IMR-90 (cell line): ENCODE measurements at regions of chr1 and their contacts with region 1.

Region 1: GRCh38 chr1:52702886-52703787 is 5.0 kb upstream of the COA7 start:
- DNase-seq: peak; percentile 80
- ATAC-seq: peak; percentile 85
- H3K4me3 ChIP-seq: peak overlapping the region; percentile 55
- H3K27ac ChIP-seq: peak overlapping the region; percentile 42
- H3K4me1 ChIP-seq: peaks cover 8% of the 10 kb centered on the region
- H3K27me3 ChIP-seq: no peaks in the 10 kb centered on the region
- CTCF ChIP-seq: no peak
- POLR2A ChIP-seq: no peak
- RAD21 ChIP-seq: no peak

Region 2: DNA sequence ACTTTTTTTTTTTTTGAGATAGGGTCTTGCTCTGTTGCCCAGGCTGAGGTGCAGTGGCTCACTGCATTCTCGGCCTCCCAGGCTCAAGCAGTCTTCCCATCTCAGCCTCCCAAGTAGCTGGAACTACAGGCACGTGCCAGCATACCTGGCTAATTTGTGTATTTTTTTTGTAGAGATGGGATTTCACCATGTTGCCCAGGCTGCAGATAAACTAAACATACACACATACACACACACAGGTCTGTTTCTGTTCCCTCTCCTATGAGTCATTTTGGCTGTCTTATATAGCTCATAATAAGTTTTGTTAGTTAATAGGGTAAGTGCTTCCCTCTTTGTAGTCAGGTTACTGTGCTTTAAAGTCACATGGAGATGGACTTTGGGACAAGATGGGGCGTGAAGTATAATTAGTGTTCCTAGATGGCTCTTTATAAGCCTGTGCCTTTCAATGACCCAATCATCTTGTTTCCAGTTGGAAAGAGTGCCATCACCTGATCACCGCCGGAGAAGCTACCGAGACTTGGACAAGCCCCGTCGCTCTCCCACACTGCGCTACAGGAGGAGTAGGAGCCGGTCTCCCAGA is 289.6 kb before region 1 on chr1:
- CTCF ChIA-PET with region 1: no interaction called
- POLR2A ChIA-PET with region 1: no interaction called
- dilution Hi-C with region 1: no loop called
- in situ Hi-C with region 1: no loop called
- intact Hi-C with region 1: no loop called
- DNase-seq: peak; percentile 50
- ATAC-seq: no peak
- H3K4me3 ChIP-seq: no peak overlapping the region
- H3K27ac ChIP-seq: no peak overlapping the region
- H3K4me1 ChIP-seq: no peaks in the 10 kb centered on the region
- H3K27me3 ChIP-seq: no peaks in the 10 kb centered on the region
- CTCF ChIP-seq: no peak
- POLR2A ChIP-seq: no peak
- RAD21 ChIP-seq: no peak

Region 3: GRCh38 chr1:52748119-52748518 is 45.0 kb after region 1 on chr1:
- CTCF ChIA-PET with region 1: interaction called, 3 read pairs
- POLR2A ChIA-PET with region 1: no interaction called
- dilution Hi-C with region 1: no loop called
- in situ Hi-C with region 1: no loop called
- intact Hi-C with region 1: loop called (anchors 5 kb)
- DNase-seq: no peak
- ATAC-seq: no peak
- H3K4me3 ChIP-seq: no peak overlapping the region
- H3K27ac ChIP-seq: no peak overlapping the region
- H3K4me1 ChIP-seq: peaks cover 11% of the 10 kb centered on the region
- H3K27me3 ChIP-seq: no peaks in the 10 kb centered on the region
- CTCF ChIP-seq: peak; percentile 33; the same call in 1 of the 2 replicates
- POLR2A ChIP-seq: no peak
- RAD21 ChIP-seq: peak; percentile 28; the same call in 1 of the 2 replicates

Region 4: DNA sequence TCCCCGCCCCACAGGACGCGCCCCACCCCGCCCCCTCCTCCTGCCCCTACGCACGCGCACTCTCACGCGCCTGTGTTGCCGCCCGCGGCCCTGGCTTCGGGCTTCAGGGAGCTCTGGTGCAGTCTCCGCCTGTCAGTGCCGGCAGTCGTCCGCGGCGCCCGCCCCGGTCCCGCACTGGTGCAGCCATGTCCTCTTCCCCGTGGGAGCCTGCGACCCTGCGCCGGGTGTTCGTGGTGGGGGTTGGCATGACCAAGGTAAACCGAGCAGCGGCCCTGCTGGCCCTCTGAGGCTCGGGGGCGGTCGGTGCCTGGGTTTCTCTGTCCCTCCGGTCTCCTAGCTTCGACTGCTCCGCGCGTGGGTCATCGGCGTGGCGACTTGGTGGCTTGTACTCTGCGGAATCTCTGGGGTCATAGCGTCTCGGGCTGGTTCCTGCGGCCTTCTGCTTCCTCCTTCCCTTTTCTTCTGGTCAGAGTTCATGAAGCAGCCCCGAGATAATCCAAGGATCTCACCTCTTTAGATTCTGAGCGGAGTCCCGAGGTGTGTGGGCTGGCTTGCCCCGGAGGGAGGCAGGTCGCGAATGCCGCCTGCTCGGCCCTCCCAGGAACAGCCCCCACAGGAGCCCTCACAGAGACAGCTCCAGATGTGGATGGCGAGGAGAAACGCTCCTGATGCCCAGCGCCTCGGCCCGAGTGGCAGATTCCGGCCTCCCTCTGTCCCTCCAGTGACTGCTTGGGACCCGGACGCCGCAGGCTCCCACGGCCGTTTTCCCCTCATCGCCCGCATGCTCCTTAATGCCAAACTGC is 224.3 kb after region 1 on chr1 and contains the start of gene SCP2:
- CTCF ChIA-PET with region 1: no interaction called
- POLR2A ChIA-PET with region 1: no interaction called
- dilution Hi-C with region 1: no loop called
- in situ Hi-C with region 1: no loop called
- intact Hi-C with region 1: loop called (anchors 10 kb)
- DNase-seq: peak; percentile 56
- ATAC-seq: peak; percentile 94
- H3K4me3 ChIP-seq: peak within 1 kb of the TSS; percentile 77
- H3K27ac ChIP-seq: peak within 1 kb of the TSS; percentile 79
- H3K4me1 ChIP-seq: 0 out of 2 replicates have a peak, but pooled peaks cover 3% of the 10 kb centered on the region
- H3K27me3 ChIP-seq: no peaks in the 10 kb centered on the region
- CTCF ChIP-seq: no peak
- POLR2A ChIP-seq: no peak
- RAD21 ChIP-seq: no peak
- total RNA-seq, gene SCP2: 70.4 and 140 TPM in 2 replicates

Region 5: DNA sequence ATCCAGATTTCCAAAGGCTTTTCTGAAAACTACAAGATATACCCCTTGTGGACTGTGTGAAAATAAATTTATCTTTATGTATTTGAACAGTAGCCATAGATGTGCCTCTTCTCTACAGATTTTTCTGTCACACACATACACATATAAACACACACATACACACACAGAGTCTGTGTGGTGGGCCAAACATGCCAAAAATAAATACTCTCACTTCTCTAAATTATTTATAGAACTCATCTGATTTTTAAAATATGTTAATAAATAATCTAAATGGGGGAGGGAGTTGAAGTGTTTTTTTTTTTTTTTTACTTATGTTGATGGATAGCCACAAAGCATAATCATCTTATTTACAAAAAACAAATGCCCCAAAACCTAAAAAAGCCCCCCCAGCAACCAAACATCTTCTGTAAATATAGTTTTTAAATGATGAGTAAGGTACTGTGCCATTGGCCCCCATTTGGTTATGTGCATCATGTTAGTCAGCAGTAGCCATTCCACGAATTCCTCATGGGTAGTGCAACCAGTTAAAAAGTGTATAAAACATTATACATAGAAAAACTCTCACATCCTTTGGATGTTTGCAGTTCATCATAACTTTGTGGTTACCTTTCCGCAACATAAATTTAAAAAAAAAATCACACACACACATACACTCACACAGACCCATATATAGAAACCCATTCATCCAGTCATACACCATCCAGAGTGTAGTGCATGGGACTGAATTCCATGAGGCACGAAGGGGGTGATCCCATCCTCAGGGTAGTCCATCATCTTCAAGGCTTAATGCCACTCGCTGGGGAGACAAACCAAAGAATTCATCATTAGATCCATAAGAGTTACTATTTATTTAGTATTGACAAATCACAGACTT is 543.4 kb after region 1 on chr1:
- CTCF ChIA-PET with region 1: no interaction called
- POLR2A ChIA-PET with region 1: no interaction called
- dilution Hi-C with region 1: no loop called
- in situ Hi-C with region 1: no loop called
- intact Hi-C with region 1: no loop called
- DNase-seq: peak; percentile 98
- ATAC-seq: peak; percentile 94
- H3K4me3 ChIP-seq: no peak overlapping the region
- H3K27ac ChIP-seq: peak overlapping the region; percentile 98
- H3K4me1 ChIP-seq: peaks cover 8% of the 10 kb centered on the region
- H3K27me3 ChIP-seq: no peaks in the 10 kb centered on the region
- CTCF ChIP-seq: no peak
- POLR2A ChIP-seq: no peak
- RAD21 ChIP-seq: no peak

Region 6: GRCh38 chr1:53678507-53678906 is 975.4 kb after region 1 on chr1:
- CTCF ChIA-PET with region 1: no interaction called
- POLR2A ChIA-PET with region 1: no interaction called
- dilution Hi-C with region 1: no loop called
- in situ Hi-C with region 1: no loop called
- intact Hi-C with region 1: no loop called
- DNase-seq: peak; percentile 19
- ATAC-seq: 0 out of 2 replicates have a peak, but pooled peaks have one; percentile 21
- H3K4me3 ChIP-seq: no peak overlapping the region
- H3K27ac ChIP-seq: no peak overlapping the region
- H3K4me1 ChIP-seq: peaks cover 9% of the 10 kb centered on the region; the same call in 1 of the 2 replicates
- H3K27me3 ChIP-seq: no peaks in the 10 kb centered on the region
- CTCF ChIP-seq: no peak
- POLR2A ChIP-seq: no peak
- RAD21 ChIP-seq: no peak